Activated CD4-positive, alpha-beta T cell treated with anti-CD3 and anti-CD28 coated beads for 36 hours (primary cell): ENCODE measurements at regions of chr18 and their contacts with region 1.

Region 1: DNA sequence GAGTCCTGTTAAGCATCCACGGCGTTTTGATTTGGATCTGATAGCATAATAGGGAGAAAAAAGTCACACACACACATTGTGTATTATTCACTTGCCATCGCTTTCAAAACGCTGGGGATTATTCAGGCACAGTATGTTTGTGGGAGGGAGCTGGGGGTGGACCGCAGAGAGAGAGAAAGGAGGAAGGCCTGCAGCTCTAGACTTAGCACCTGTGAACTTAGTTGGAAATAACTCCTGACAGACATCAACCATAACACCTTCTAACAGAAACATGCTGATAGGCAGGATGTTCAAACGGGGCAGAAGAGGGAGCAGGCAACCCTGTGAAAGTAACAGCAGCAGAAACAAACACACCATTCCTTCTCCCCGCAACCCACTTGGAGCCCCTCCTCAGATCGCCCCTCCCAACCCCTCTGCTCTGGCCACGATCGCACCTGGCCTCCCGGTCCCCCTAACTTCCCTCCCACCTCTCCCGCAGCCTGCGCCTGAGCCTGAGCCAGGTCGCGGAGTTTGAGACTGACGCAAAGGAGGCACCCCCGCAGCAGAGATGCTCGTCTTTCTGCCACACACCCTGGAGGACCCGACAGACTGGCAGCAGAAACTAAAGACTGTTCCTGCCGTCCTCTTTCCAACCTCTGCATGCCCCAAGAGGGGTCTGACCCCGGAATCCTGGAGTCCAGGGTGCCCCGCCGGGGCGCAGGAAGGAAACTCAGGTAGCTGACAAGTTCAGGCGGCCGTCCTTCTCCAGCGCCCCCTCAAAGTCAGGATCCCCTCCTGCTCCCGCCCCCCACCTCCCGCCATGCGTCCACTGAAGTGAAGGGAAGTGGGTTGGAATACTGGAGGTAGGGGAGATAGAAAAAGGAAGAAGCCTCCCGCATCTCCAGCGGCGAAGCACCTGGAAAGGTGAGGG is 738 bp downstream of the CHST9 start:
- DNase-seq: no peak
- ATAC-seq: no peak
- H3K4me3 Mint-ChIP-seq: no peak overlapping the region
- H3K27ac Mint-ChIP-seq: no peak overlapping the region
- H3K4me1 Mint-ChIP-seq: peaks cover 2% of the 10 kb centered on the region
- H3K27me3 Mint-ChIP-seq: peaks cover 27% of the 10 kb centered on the region

Region 2: GRCh38 chr18:27226556-27227075 is 42.2 kb after region 1 on chr18:
- CTCF ChIA-PET with region 1: no interaction called
- POLR2A ChIA-PET with region 1: no interaction called
- intact Hi-C with region 1: loop called in 1 of 2 experiments (anchors 5 kb)
- DNase-seq: no peak
- ATAC-seq: no peak
- H3K4me3 Mint-ChIP-seq: no peak overlapping the region
- H3K27ac Mint-ChIP-seq: no peak overlapping the region
- H3K4me1 Mint-ChIP-seq: no peaks in the 10 kb centered on the region
- H3K27me3 Mint-ChIP-seq: no peaks in the 10 kb centered on the region